ENCODE measurements at regions of chr2 and their contacts with region 1.

Region 1: GRCh38 chr2:127365211-127365643 is 22.5 kb downstream of the MAP3K2 start:
- DNase-seq: peak in 1 of 35 experiments; percentile 12
- ATAC-seq: peak; percentile 33 to 58 (median 49)
- H3K4me3 ChIP-seq: no peak overlapping the region
- H3K4me3 Mint-ChIP-seq: no peak overlapping the region
- H3K27ac ChIP-seq: no peak overlapping the region
- H3K27ac Mint-ChIP-seq: peak overlapping the region in 1 of 2 donors; percentile 75
- H3K4me1 ChIP-seq: peaks cover 4 to 15% of the 10 kb centered on the region in 2 experiments
- H3K4me1 Mint-ChIP-seq: peaks cover 62 to 77% (median 70%) of the 10 kb centered on the region in 3 donors
- H3K27me3 ChIP-seq: no peaks in the 10 kb centered on the region
- H3K27me3 Mint-ChIP-seq: no peaks in the 10 kb centered on the region

Region 2: DNA sequence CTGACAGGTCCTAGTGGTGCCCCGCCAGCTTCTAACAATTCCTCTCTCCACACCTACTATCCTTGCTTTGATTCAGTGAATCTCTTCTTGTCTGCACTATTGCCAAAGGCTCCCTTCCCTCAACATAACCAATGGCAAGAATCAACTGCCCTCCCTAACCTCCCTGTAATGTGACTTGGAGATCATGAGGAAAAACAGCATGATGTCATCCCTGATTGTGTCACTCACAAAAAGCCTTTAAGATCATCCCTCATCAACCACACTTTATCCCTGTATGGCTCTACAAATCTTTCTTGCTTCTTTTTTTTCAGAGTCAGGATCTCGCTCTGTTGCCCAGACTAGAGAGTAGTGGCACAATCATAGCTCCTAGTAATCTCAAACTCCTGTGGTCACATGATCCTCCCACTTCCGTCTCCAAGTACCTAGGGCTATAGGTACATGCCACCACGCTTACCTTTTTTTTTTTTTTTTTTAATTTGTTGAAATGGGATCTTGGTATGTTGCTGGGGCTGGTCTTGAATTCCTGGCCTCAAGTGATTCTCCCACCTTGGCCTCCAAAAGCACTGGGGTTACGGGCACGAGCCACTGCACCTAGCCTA is 642.9 kb after region 1 on chr2:
- CTCF ChIA-PET with region 1: no interaction called
- POLR2A ChIA-PET with region 1: no interaction called
- DNase-seq: no peak
- ATAC-seq: no peak
- H3K4me3 ChIP-seq: no peak overlapping the region
- H3K4me3 Mint-ChIP-seq: no peak overlapping the region
- H3K27ac ChIP-seq: no peak overlapping the region
- H3K27ac Mint-ChIP-seq: no peak overlapping the region
- H3K4me1 ChIP-seq: no peaks in the 10 kb centered on the region
- H3K4me1 Mint-ChIP-seq: no peaks in the 10 kb centered on the region
- H3K27me3 ChIP-seq: no peaks in the 10 kb centered on the region
- H3K27me3 Mint-ChIP-seq: no peaks in the 10 kb centered on the region

Region 3: GRCh38 chr2:128319631-128320191 is 954.5 kb after region 1 on chr2:
- CTCF ChIA-PET with region 1: no interaction called
- POLR2A ChIA-PET with region 1: interaction called in 1 of 2 experiments, 13 read pairs
- DNase-seq: peak in 1 of 35 experiments; percentile 2
- ATAC-seq: no peak
- H3K4me3 ChIP-seq: no peak overlapping the region
- H3K4me3 Mint-ChIP-seq: peak overlapping the region in 2 of 3 donors; percentile 70 to 88
- H3K27ac ChIP-seq: no peak overlapping the region
- H3K27ac Mint-ChIP-seq: no peak overlapping the region
- H3K4me1 ChIP-seq: peaks cover 6 to 53% of the 10 kb centered on the region in 2 experiments
- H3K4me1 Mint-ChIP-seq: peaks cover 33 to 36% (median 36%) of the 10 kb centered on the region in 3 donors
- H3K27me3 ChIP-seq: peaks cover 0 to 40% of the 10 kb centered on the region in 2 experiments
- H3K27me3 Mint-ChIP-seq: no peaks in the 10 kb centered on the region